GM12878 (cell line): ENCODE measurements at regions of chr7 and their contacts with region 1.

Region 1: GRCh38 chr7:90178679-90179278 is 24.5 kb downstream of the STEAP1 start:
- DNase-seq: peak; percentile 65
- ATAC-seq: peak; percentile 95
- H3K4me3 ChIP-seq: no peak overlapping the region
- H3K27ac ChIP-seq: peak overlapping the region; percentile 19
- H3K4me1 ChIP-seq: peaks cover 23% of the 10 kb centered on the region
- H3K27me3 ChIP-seq: no peaks in the 10 kb centered on the region
- CTCF ChIP-seq: no peak
- EP300 ChIP-seq: peak in 1 of 2 experiments; percentile 80; a peak in 1 of 4 replicates
- POLR2A ChIP-seq: no peak
- RAD21 ChIP-seq: no peak

Region 2: GRCh38 chr7:90165724-90166123 is 13.1 kb before region 1 on chr7:
- CTCF ChIA-PET with region 1: interaction called, 4 read pairs
- POLR2A ChIA-PET with region 1: interaction called, 4 read pairs
- RAD21 ChIA-PET with region 1: interaction called, 3 read pairs
- SMC1A ChIA-PET with region 1: interaction called, 18 read pairs
- in situ Hi-C with region 1: no loop called
- intact Hi-C with region 1: no loop called
- DNase-seq: no peak
- ATAC-seq: no peak
- H3K4me3 ChIP-seq: no peak overlapping the region
- H3K27ac ChIP-seq: no peak overlapping the region
- H3K4me1 ChIP-seq: no peaks in the 10 kb centered on the region
- H3K27me3 ChIP-seq: no peaks in the 10 kb centered on the region
- CTCF ChIP-seq: no peak
- EP300 ChIP-seq: no peak
- POLR2A ChIP-seq: no peak
- RAD21 ChIP-seq: no peak

Region 3: GRCh38 chr7:90194911-90195809 is 16.4 kb after region 1 on chr7:
- CTCF ChIA-PET with region 1: no interaction called
- POLR2A ChIA-PET with region 1: interaction called, 11 read pairs
- RAD21 ChIA-PET with region 1: interaction called, 18 read pairs
- SMC1A ChIA-PET with region 1: interaction called, 15 read pairs
- in situ Hi-C with region 1: no loop called
- intact Hi-C with region 1: no loop called
- DNase-seq: no peak
- ATAC-seq: no peak
- H3K4me3 ChIP-seq: no peak overlapping the region
- H3K27ac ChIP-seq: no peak overlapping the region
- H3K4me1 ChIP-seq: no peaks in the 10 kb centered on the region
- H3K27me3 ChIP-seq: no peaks in the 10 kb centered on the region
- CTCF ChIP-seq: no peak
- EP300 ChIP-seq: no peak
- POLR2A ChIP-seq: no peak
- RAD21 ChIP-seq: no peak

Region 4: DNA sequence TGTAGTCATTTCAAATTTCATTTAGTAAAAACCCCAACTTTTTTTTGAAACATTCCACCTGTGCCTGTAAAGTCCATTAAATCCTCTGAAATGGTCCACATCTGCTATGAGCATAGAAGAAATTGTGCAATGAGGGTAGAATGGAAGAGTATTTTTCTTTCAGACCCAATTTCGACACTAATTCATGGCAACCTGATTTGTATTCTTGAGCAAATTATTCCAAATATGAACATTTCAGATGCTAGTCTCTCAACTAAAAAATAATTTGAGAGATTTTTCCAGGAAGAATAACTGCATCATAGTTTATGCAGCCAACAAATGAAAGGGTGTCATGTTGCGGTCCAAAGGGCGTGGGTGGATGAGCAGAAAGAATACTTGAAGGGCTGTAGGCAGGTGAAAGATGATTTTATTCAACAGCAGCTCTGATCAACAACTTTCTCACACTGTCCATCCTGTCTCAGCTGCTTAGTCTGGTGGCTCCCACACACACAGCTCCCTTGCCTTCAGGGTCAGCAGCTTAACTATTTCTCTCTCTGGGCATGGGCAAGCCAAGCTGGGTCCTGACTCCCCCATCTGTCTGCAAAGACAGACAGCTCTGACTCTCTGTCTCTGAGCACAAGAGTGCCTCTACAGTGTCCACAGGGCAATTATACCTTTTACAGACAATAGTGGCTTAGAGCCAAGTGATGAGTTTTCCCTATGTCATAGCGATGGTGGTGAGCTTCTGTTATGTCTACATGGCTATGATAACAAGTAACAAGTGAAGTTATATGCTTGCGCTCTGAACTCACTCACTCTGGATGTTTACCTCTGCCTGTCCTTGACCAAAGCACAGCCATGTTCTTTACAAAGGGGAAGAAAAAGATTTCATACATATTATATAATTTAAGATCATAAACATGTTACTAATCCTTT is 44.3 kb after region 1 on chr7:
- CTCF ChIA-PET with region 1: interaction called, 4 read pairs
- POLR2A ChIA-PET with region 1: interaction called, 5 read pairs
- RAD21 ChIA-PET with region 1: no interaction called
- SMC1A ChIA-PET with region 1: interaction called, 18 read pairs
- in situ Hi-C with region 1: no loop called
- intact Hi-C with region 1: no loop called
- DNase-seq: no peak
- ATAC-seq: peak; percentile 75
- H3K4me3 ChIP-seq: no peak overlapping the region
- H3K27ac ChIP-seq: no peak overlapping the region
- H3K4me1 ChIP-seq: no peaks in the 10 kb centered on the region
- H3K27me3 ChIP-seq: no peaks in the 10 kb centered on the region
- CTCF ChIP-seq: no peak
- EP300 ChIP-seq: no peak
- POLR2A ChIP-seq: no peak
- RAD21 ChIP-seq: no peak